ENCODE measurements at regions of chr19 and their contacts with region 1.

Region 1: GRCh38 chr19:36214386-36215275 is at the starts of genes ZNF146 and ZNF565:
- DNase-seq: peak; percentile 98
- H3K4me3 ChIP-seq: peak within 1 kb of the TSS; percentile 78 to 93 (median 87)
- H3K27ac ChIP-seq: peak within 1 kb of the TSS; percentile 82
- H3K4me1 ChIP-seq: peaks cover 5% of the 10 kb centered on the region
- H3K27me3 ChIP-seq: no peaks in the 10 kb centered on the region
- CTCF ChIP-seq: no peak
- POLR2A ChIP-seq: peak; percentile 86
- total RNA-seq, gene ZNF146: 63.3 and 65.9 TPM in 2 replicates
- total RNA-seq, gene ZNF565: 3.1 and 3.6 TPM in 2 replicates

Region 2: DNA sequence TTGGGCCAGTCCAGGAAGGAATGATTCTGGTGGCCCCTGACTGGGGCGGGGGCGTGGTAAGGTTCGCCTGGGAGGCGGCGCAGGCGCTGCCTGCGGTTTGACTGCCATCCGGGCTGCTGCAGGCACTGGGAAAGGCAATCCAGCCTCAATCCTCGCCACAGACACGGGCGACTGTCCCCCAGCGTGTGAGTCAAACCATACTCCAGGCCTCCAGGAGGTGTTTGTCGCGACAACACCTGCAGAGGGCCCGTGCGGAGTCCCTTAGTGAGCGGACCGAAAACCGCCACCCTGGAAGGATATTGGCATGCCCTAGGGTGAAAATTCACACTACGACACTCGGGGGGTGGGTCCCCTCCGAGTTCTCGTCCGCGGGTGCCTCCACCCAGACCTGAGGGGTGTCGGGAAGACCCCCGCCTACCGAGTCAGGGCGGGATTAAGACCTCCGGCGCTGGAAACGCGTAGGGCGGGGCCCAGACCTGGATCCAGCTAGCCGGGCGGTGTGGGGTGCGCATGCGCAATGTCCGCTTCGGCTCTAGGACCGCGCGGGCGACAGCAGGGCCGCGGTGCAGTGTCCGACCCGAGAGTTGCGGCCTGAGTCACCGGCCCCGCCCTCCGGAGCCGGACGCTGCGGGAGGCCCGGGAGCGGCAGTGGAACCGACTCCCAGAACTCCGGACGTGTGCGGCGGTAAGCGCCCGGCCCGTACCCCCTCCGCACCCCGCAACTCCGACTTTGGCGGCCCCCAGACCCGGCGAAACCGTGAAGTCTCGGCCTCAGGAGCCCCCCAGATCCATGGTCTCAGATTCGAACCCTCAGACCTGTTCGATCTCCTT is 74.9 kb before region 1 on chr19 and contains the start of gene CAPNS1:
- CTCF ChIA-PET with region 1: no interaction called
- POLR2A ChIA-PET with region 1: no interaction called
- dilution Hi-C with region 1: no loop called
- intact Hi-C with region 1: loop called (anchors 2 kb)
- DNase-seq: peak; percentile 97
- H3K4me3 ChIP-seq: peak within 1 kb of the TSS; percentile 89 to 97 (median 91)
- H3K27ac ChIP-seq: peak within 1 kb of the TSS; percentile 91
- H3K4me1 ChIP-seq: peaks cover 20% of the 10 kb centered on the region
- H3K27me3 ChIP-seq: no peaks in the 10 kb centered on the region
- CTCF ChIP-seq: no peak
- POLR2A ChIP-seq: peak; percentile 96
- total RNA-seq, gene CAPNS1: 722 and 777 TPM in 2 replicates

Region 3: GRCh38 chr19:36378625-36379509 is 164.2 kb after region 1 on chr19 and contains the start of gene ZFP14:
- CTCF ChIA-PET with region 1: interaction called, 3 read pairs
- POLR2A ChIA-PET with region 1: no interaction called
- dilution Hi-C with region 1: no loop called
- intact Hi-C with region 1: loop called (anchors 1 kb)
- DNase-seq: peak; percentile 94
- H3K4me3 ChIP-seq: peak within 1 kb of the TSS; percentile 62 to 87 (median 78)
- H3K27ac ChIP-seq: no peak within 1 kb of the TSS
- H3K4me1 ChIP-seq: peaks cover 7% of the 10 kb centered on the region
- H3K27me3 ChIP-seq: no peaks in the 10 kb centered on the region
- CTCF ChIP-seq: peak in 1 of 2 donors; percentile 20
- POLR2A ChIP-seq: peak; percentile 58
- total RNA-seq, gene ZFP14: 2.6 and 3.1 TPM in 2 replicates

Region 4: DNA sequence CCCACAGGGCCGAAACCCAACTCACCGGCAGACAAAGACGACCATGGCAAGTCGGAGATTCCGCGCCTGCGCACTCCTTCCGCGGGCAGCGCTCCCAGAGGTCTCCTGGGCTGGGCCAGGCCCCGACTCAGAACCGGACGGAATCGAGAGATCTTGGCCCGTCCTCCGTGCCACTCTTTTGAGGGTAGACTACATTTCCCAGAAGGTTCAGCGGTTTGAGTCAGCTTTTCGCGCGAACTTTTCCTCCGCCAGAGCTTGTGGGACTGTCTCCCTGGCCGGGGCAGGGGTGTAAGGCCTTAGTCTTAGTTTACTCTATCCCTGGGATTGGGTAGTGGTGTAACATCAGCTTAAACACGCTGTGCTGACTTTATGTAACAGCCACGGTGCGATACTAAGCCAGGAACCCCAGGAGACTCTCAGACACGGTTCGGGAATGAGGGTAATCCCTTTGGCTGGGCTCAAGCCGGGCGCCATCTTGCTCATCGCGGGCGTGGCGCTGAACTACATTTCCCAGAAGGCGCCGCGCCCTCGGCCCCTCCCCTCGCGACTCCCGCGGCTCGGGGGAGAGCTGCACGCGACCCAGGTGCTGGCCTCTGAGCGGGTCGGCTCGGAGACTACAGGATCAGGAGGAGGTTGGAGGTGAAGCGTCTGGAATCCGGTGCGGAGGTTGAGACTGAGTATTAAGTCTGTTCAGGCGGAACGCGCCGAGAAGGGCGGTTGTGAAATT is 313.7 kb after region 1 on chr19 and contains the start of gene ZNF260:
- CTCF ChIA-PET with region 1: no interaction called
- POLR2A ChIA-PET with region 1: interaction called, 3 read pairs
- dilution Hi-C with region 1: no loop called
- intact Hi-C with region 1: loop called (anchors 1 kb)
- DNase-seq: peak; percentile 98
- H3K4me3 ChIP-seq: peak within 1 kb of the TSS; percentile 40 to 91 (median 50)
- H3K27ac ChIP-seq: peak within 1 kb of the TSS; percentile 65
- H3K4me1 ChIP-seq: peaks cover 9% of the 10 kb centered on the region
- H3K27me3 ChIP-seq: no peaks in the 10 kb centered on the region
- CTCF ChIP-seq: no peak
- POLR2A ChIP-seq: peak; percentile 86
- total RNA-seq, gene ZNF260: 10.5 and 13.9 TPM in 2 replicates